Psoas muscle (tissue), 8 donors: ENCODE measurements at regions of chr16 and their contacts with region 1.

Region 1: DNA sequence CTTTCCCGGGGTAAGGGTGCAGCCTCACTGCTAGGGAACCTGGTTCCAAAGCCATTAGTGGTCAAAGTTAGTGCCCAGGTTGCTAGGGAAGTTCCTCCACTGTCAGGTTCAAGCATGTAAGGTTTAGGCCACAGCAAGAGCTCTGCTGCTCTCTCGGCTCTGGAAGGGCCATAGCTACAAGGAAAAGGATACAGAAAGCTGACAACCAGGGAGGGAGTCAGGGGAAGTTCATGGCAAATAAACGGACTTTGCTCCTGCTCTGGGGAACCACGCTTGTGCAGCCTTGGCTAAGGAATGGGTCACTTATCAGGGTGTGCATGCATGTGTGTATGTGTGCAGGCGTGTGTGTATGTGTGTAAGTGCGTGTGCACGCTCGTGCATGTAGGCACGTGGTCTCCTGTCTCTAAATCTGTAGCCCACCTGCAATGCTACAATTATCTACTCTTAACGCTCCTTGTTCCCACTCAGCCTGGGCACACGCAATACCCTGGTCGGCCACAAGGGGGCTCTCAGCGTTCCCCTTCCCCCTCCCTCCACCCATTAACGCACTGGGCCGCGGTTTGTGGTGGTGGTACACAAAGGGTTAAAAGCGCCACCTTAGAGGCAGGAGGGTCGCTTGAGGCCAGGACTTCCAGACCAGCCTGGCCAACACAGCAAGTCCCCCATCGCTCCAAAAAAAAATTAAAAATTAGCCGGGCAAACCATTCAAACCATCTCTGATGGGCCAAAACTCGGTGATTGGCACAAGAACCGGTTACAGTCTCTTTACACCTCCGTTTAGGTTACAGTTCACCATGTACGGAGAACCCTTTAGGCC is 48.4 kb upstream of the KDM8 start:
- DNase-seq: peak; percentile 51 to 77
- ATAC-seq: peak; percentile 43 to 77 (median 73)
- H3K4me3 ChIP-seq: no peak overlapping the region
- H3K27ac ChIP-seq: no peak overlapping the region
- H3K4me1 ChIP-seq: no peaks in the 10 kb centered on the region
- H3K27me3 ChIP-seq: no peaks in the 10 kb centered on the region
- CTCF ChIP-seq: peak; percentile 95

Region 2: DNA sequence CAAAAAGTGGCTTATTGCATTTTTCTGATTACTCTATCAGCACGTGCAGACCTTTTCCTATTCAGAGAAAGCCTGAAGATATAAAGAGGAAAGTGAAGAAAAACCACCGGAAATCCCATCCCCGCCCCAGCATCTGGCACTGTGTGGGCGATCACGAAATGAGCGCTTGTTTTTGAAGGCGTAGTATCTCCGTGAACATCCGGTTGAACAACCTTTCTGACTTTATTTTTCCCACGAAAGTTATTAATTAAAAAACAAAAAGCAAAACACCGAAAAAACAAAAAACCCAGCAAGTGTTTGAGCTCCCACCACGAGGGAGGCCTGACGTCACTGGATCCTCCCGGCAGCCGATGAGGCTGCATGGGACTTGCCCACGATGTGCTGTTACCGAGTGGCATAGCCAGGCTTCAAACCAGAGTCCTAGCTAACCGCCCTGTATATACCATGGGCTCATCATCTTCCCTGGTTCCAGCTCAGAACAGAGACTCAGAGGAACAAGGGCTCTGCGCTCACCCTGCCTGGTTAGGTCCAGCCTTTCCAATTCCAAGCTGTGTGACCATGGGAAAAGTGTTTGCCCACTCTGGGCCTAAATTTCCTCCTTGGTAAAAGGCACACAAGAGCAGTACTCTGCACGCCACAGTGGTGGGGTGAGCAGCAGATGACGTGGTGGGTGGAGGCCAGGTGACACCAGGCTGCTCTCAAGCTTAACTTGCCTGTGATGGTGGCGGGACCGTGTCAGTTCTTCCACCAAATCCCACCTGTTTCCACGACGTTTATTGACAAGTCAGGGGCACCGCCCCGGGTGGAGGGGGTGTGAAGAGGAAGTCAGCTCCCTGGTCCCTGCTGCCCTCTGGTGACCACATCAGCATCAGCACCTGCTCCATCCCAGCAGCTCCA is 212.8 kb after region 1 on chr16:
- intact Hi-C with region 1: loop called in 1 of 2 experiments (anchors 5 kb)
- DNase-seq: peak; percentile 78 to 85
- ATAC-seq: peak; percentile 68 to 81 (median 78)
- H3K4me3 ChIP-seq: peak overlapping the region; percentile 42
- H3K27ac ChIP-seq: peak overlapping the region; percentile 3
- H3K4me1 ChIP-seq: no peaks in the 10 kb centered on the region
- H3K27me3 ChIP-seq: peaks cover 0 to 4% (median 0%) of the 10 kb centered on the region in 3 donors
- CTCF ChIP-seq: peak; percentile 67

Region 3: GRCh38 chr16:27455700-27456099 is 300.8 kb after region 1 on chr16:
- intact Hi-C with region 1: loop called in 1 of 2 experiments (anchors 5 kb)
- DNase-seq: peak in 1 of 2 donors; percentile 30
- ATAC-seq: no peak
- H3K4me3 ChIP-seq: no peak overlapping the region
- H3K27ac ChIP-seq: no peak overlapping the region
- H3K4me1 ChIP-seq: peaks cover 10% of the 10 kb centered on the region
- H3K27me3 ChIP-seq: no peaks in the 10 kb centered on the region
- CTCF ChIP-seq: no peak